OCI-LY7 (cell line): ENCODE measurements at regions of chr11 and their contacts with region 1.

Region 1: GRCh38 chr11:27209562-27210005 is 153.4 kb downstream of the CCDC34 start:
- DNase-seq: no peak
- H3K4me3 ChIP-seq: no peak overlapping the region
- H3K27ac ChIP-seq: no peak overlapping the region
- H3K4me1 ChIP-seq: no peaks in the 10 kb centered on the region
- CTCF ChIP-seq: no peak

Region 2: GRCh38 chr11:27362749-27363575 is 153.4 kb after region 1 on chr11 and contains the start of gene CCDC34:
- CTCF ChIA-PET with region 1: no interaction called
- POLR2A ChIA-PET with region 1: no interaction called
- intact Hi-C with region 1: loop called (anchors 10 kb)
- DNase-seq: peak; percentile 97
- H3K4me3 ChIP-seq: peak within 1 kb of the TSS; percentile 80
- H3K27ac ChIP-seq: peak within 1 kb of the TSS; percentile 50
- H3K4me1 ChIP-seq: peaks cover 21% of the 10 kb centered on the region
- CTCF ChIP-seq: no peak
- total RNA-seq, gene CCDC34: 20.8 and 21.9 TPM in 2 replicates